ENCODE measurements at regions of chr18 and their contacts with region 1.

Region 1: GRCh38 chr18:32018331-32019250 is at the start of gene RNF125:
- DNase-seq: peak; percentile 90
- H3K4me3 Mint-ChIP-seq: peak within 1 kb of the TSS; percentile 99
- H3K27ac Mint-ChIP-seq: peak within 1 kb of the TSS; percentile 99
- H3K4me1 Mint-ChIP-seq: peaks cover 50% of the 10 kb centered on the region
- H3K27me3 Mint-ChIP-seq: peaks cover 2% of the 10 kb centered on the region
- total RNA-seq, gene RNF125: 32.2 and 34.6 TPM in 2 replicates

Region 2: DNA sequence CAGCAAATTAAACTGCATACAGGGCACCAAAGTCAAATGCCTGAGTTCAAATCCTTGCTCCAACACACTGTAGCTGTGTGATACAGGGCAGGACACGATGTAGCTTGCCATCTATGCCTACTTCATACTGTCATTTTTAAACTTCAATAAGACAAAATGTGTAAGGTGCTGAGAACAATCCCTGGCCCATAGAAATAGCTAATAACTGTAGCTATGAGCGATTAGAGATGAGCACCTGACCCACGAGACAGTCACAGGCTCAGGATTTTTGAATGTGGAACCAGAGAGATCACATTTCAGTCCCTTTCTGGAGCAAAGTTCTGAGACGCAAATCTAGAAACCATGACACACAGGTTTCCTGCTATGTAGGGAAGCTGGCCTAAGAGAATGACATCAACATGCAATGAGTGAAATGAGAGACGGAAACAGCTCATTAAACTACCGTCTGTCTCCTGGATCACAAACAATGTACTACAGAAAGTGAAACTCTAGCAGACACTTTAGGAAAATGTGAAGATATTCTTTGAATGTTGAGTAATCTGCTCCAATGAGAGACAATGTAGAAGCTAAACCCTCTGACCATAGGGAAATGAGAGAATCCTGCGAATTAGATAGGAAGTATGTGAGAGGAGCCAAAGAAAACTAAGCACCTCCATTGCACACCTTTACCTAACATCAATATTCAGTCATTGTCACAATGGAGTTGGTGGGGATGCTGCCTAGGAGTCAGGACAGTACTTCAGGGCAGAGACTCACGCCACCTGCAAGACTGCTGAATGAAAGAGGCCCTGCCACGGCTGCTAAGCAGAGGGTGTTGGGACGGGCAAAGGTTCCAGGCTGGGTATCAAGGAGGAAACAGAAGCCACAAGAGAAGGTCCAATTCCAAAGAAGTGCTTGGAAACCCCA is 359.7 kb before region 1 on chr18:
- intact Hi-C with region 1: loop called (anchors 2 kb)
- DNase-seq: peak; percentile 7
- H3K4me3 Mint-ChIP-seq: peak overlapping the region; percentile 20
- H3K27ac Mint-ChIP-seq: peak overlapping the region; percentile 74
- H3K4me1 Mint-ChIP-seq: peaks cover 21% of the 10 kb centered on the region
- H3K27me3 Mint-ChIP-seq: peaks cover 2% of the 10 kb centered on the region

Region 3: DNA sequence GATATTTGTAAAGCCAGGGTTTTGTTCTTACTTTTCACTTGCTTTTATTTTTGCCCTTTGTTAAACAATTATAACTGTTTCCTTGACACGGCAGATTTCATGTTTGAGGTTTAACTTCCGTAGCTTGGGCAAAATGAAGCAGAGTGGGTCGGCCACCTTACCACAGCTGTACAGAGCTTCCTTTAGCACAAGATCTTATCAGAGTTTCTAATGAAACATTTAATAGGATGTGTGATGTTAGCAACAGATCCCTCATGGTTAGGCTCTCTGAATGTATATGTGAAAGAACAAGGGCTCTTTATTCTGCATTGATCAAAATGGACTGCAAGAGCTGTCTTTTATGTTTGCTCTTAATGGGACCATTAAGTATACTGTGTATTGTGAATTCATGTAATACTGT is 22.3 kb after region 1 on chr18:
- intact Hi-C with region 1: loop called (anchors 1 kb)
- DNase-seq: peak; percentile 49
- H3K4me3 Mint-ChIP-seq: peak overlapping the region; percentile 73
- H3K27ac Mint-ChIP-seq: peak overlapping the region; percentile 95
- H3K4me1 Mint-ChIP-seq: peaks cover 48% of the 10 kb centered on the region
- H3K27me3 Mint-ChIP-seq: no peaks in the 10 kb centered on the region

Region 4: DNA sequence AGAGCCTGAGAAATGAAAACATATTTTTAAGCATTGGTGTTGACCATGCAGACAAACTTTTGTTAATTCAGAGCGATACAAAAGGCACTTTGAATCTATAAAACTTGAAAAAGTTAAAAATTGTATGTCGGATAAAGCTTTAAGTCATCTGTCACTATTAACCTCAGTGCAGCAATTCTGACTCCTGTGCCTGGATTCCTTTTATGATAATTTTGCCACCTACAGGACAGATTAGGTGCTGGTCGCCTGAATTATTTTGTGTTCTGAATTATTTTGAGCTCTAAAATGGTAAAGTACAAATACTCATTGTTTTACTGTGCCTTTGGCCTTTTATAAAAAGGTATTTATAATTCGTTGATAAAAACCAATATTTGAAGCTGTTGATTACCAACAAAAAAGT is 53.7 kb after region 1 on chr18:
- intact Hi-C with region 1: loop called (anchors 1 kb)
- DNase-seq: no peak
- H3K4me3 Mint-ChIP-seq: no peak overlapping the region
- H3K27ac Mint-ChIP-seq: no peak overlapping the region
- H3K4me1 Mint-ChIP-seq: peaks cover 22% of the 10 kb centered on the region
- H3K27me3 Mint-ChIP-seq: no peaks in the 10 kb centered on the region

Region 5: GRCh38 chr18:32110005-32110404 is 91.4 kb after region 1 on chr18:
- intact Hi-C with region 1: loop called (anchors 1 kb)
- DNase-seq: no peak
- H3K4me3 Mint-ChIP-seq: no peak overlapping the region
- H3K27ac Mint-ChIP-seq: no peak overlapping the region
- H3K4me1 Mint-ChIP-seq: peaks cover 45% of the 10 kb centered on the region
- H3K27me3 Mint-ChIP-seq: no peaks in the 10 kb centered on the region